ENCODE measurements at regions of chr16 and their contacts with region 1.

Region 1: GRCh38 chr16:3142327-3142726 is 7.5 kb downstream of the ZNF213 start:
- DNase-seq: no peak
- ATAC-seq: no peak
- H3K4me3 Mint-ChIP-seq: no peak overlapping the region
- H3K27ac Mint-ChIP-seq: no peak overlapping the region
- H3K4me1 Mint-ChIP-seq: no peaks in the 10 kb centered on the region
- H3K27me3 Mint-ChIP-seq: no peaks in the 10 kb centered on the region
- CTCF ChIP-seq: no peak

Region 2: DNA sequence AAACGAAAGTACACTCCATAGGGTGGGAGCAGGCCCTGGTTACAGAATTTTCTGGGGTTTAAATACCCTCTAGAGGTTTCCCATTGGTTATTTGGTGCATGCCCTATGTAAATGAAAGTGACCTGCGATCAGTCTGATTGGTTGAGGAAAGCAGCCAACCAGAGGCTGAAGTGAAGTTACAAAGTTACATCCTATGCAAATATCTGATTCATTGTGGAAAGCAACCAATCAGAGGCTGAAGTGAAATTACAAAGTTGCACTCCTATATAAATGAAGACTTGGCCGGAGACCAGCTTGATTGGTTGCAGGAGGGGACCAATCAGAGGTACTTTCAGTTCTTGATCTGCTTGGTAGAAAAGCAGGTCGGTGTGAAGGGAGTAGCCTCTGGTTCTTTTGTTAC is 325.6 kb after region 1 on chr16:
- CTCF ChIA-PET with region 1: no interaction called
- POLR2A ChIA-PET with region 1: no interaction called
- intact Hi-C with region 1: no loop called
- DNase-seq: no peak
- ATAC-seq: no peak
- H3K4me3 Mint-ChIP-seq: no peak overlapping the region
- H3K27ac Mint-ChIP-seq: no peak overlapping the region
- H3K4me1 Mint-ChIP-seq: peaks cover 39% of the 10 kb centered on the region
- H3K27me3 Mint-ChIP-seq: no peaks in the 10 kb centered on the region
- CTCF ChIP-seq: no peak

Region 3: GRCh38 chr16:4298761-4299522 is 1156.6 kb after region 1 on chr16:
- CTCF ChIA-PET with region 1: no interaction called
- POLR2A ChIA-PET with region 1: interaction called, 12 read pairs
- intact Hi-C with region 1: no loop called
- DNase-seq: no peak
- ATAC-seq: no peak
- H3K4me3 Mint-ChIP-seq: no peak overlapping the region
- H3K27ac Mint-ChIP-seq: no peak overlapping the region
- H3K4me1 Mint-ChIP-seq: no peaks in the 10 kb centered on the region
- H3K27me3 Mint-ChIP-seq: no peaks in the 10 kb centered on the region
- CTCF ChIP-seq: no peak

Measured in activated B cell treated with CpG ODN at 0.5 μM for 24 hours (primary cell).